Dorsolateral prefrontal cortex (tissue), 120 donors: ENCODE measurements at regions of chr10 and their contacts with region 1.

Region 1: GRCh38 chr10:13271552-13272163 is 28.2 kb downstream of the PHYH start:
- DNase-seq: peak in 7 of 10 donors; percentile 9 to 53 (median 45)
- H3K4me3 ChIP-seq: peak overlapping the region in 34 of 59 donors; percentile 4 to 47 (median 30)
- H3K27ac ChIP-seq: peak overlapping the region in 26 of 59 donors; percentile 1 to 74 (median 38)
- H3K27me3 ChIP-seq: no peaks in the 10 kb centered on the region
- CTCF ChIP-seq: peak in 37 of 56 donors; percentile 11 to 53 (median 36)

Region 2: DNA sequence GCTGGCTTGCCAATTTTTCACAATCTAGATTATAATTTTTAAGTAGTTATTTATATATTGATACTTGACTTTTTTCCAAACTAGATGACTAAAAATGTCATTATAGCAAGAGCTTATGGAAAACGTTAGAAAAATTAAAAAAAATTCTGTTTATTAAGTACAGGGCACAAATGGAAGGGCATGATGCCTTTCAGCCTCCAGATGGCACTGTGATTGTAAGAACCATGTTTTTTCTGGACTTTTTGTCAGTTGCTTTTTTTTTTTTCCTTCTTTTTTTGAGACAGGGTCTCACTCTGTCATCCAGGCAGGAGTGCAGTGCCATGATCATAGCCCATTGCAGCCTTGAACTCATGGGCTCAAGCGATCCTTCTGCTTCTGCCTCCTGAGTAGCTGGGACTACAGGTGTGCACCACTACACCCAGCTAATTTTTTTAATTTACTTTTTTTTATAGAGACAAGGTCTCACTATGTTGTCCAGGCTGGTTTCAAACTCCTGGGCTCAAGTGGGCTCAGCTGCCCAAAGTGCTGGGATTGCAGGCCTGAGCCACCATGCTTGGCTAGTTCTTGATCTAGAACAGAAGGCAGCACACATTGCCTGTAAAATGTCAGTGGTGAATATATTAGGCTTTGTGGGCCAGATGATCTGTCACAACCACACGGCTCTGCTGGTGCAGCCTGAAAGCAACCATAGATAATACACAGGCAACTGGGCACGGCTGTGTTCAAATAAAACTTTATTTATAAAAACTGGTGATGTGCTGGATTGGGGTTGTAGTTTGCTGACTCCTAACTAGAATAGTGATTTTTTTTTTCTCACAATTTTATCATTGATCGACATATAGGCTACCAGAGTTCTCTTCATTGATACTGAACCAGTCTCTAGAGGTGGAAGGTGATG is 64.9 kb before region 1 on chr10:
- intact Hi-C with region 1: loop called in 1 of 2 experiments (anchors 10 kb)
- DNase-seq: no peak
- H3K4me3 ChIP-seq: no peak overlapping the region
- H3K27ac ChIP-seq: no peak overlapping the region
- H3K27me3 ChIP-seq: no peaks in the 10 kb centered on the region
- CTCF ChIP-seq: peak; percentile 35 to 73 (median 54)